ENCODE measurements at regions of chr1 and their contacts with region 1.

Region 1: DNA sequence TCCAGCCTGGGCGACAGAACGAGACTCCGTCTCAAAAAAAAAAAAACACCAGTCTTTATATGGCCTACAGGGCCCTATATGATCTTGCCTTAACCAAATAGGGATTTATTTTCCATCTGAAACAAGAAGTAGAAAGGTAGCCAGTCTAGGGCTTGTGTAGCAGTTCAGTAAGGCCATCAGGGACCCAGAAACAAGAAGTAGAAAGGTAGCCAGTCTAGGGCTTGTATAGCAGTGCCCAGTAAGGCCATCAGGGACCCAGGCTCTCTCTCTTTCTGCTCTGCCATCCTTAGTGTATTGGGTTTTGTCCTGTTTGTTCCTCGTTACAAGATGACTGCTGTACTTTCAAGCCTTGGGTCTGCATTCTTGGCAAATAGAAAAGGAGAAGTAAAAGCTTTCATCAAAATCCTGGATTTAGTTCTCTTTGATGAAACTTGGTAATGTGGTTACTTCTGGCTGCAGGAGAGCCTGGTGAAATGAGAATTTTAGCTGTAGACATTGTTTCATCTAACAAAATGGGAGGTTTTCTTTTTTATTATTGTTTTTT is 46.1 kb downstream of the PKN2 start:
- DNase-seq: no peak
- ATAC-seq: no peak
- H3K4me3 Mint-ChIP-seq: no peak overlapping the region
- H3K27ac Mint-ChIP-seq: no peak overlapping the region
- H3K4me1 Mint-ChIP-seq: peaks cover 31% of the 10 kb centered on the region
- H3K27me3 Mint-ChIP-seq: no peaks in the 10 kb centered on the region

Region 2: GRCh38 chr1:87834941-87835340 is 895.3 kb before region 1 on chr1:
- CTCF ChIA-PET with region 1: no interaction called
- POLR2A ChIA-PET with region 1: no interaction called
- intact Hi-C with region 1: loop called in 1 of 2 experiments (anchors 5 kb)
- DNase-seq: no peak
- ATAC-seq: no peak
- H3K4me3 Mint-ChIP-seq: no peak overlapping the region
- H3K27ac Mint-ChIP-seq: no peak overlapping the region
- H3K4me1 Mint-ChIP-seq: no peaks in the 10 kb centered on the region
- H3K27me3 Mint-ChIP-seq: peaks cover 2% of the 10 kb centered on the region

Region 3: GRCh38 chr1:88608139-88608943 is 121.9 kb before region 1 on chr1:
- CTCF ChIA-PET with region 1: no interaction called
- POLR2A ChIA-PET with region 1: no interaction called
- intact Hi-C with region 1: no loop called
- DNase-seq: no peak
- ATAC-seq: peak; percentile 64
- H3K4me3 Mint-ChIP-seq: no peak overlapping the region
- H3K27ac Mint-ChIP-seq: no peak overlapping the region
- H3K4me1 Mint-ChIP-seq: peaks cover 3% of the 10 kb centered on the region
- H3K27me3 Mint-ChIP-seq: peaks cover 5% of the 10 kb centered on the region

Region 4: DNA sequence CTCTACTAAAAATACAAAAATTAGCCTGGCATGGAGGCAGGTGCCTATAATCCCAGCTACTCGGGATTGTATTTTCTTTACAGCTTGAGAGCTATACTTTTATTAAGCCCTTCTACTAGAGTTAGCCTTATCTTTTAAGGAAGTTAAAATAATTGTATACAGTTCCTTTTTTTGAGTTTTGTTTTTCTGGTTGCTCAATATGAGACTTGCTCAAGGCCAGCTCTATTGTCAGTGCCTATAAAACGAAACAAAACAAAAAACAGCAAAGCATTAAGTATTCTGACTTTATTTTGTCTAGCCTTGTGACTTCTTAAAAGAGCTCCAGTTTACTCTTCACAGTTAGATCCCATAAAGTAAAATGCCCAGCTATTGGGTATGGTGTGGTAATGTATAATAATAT is 28.9 kb before region 1 on chr1:
- CTCF ChIA-PET with region 1: no interaction called
- POLR2A ChIA-PET with region 1: no interaction called
- intact Hi-C with region 1: loop called in 1 of 2 experiments (anchors 2 kb)
- DNase-seq: no peak
- ATAC-seq: no peak
- H3K4me3 Mint-ChIP-seq: no peak overlapping the region
- H3K27ac Mint-ChIP-seq: no peak overlapping the region
- H3K4me1 Mint-ChIP-seq: peaks cover 29% of the 10 kb centered on the region
- H3K27me3 Mint-ChIP-seq: no peaks in the 10 kb centered on the region